B cell (primary cell): ENCODE measurements at regions of chr14 and their contacts with region 1.

Region 1: DNA sequence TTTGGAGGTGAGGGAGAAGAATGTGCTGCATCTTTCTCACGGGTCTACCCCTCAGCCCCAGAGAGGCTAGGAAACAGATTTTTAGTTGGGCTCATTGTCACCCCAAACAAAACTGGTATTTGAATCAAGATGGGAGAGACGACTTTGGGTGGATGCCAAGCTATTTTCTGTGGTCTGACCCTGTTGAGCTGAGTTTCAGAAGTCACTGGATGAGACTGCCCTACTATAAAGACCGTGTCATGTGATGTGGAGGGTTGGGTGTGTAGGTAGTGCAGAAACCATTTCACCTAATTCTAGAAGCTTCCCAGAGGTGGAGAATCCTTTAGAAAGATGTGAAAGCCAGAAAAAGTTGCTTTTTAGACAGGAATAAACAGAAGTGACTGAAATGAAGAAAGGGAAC is 60.2 kb downstream of the IFT43 start:
- DNase-seq: no peak
- ATAC-seq: no peak
- H3K4me3 ChIP-seq: no peak overlapping the region
- H3K4me3 Mint-ChIP-seq: no peak overlapping the region
- H3K27ac ChIP-seq: no peak overlapping the region
- H3K27ac Mint-ChIP-seq: no peak overlapping the region
- H3K4me1 ChIP-seq: no peaks in the 10 kb centered on the region
- H3K4me1 Mint-ChIP-seq: peaks cover 5% of the 10 kb centered on the region
- H3K27me3 ChIP-seq: no peaks in the 10 kb centered on the region
- H3K27me3 Mint-ChIP-seq: no peaks in the 10 kb centered on the region
- CTCF ChIP-seq: no peak

Region 2: GRCh38 chr14:76352639-76353281 is 307.0 kb after region 1 on chr14:
- CTCF ChIA-PET with region 1: interaction called, 121 read pairs
- POLR2A ChIA-PET with region 1: no interaction called
- intact Hi-C with region 1: no loop called
- DNase-seq: peak; percentile 63
- ATAC-seq: no peak
- H3K4me3 ChIP-seq: no peak overlapping the region
- H3K4me3 Mint-ChIP-seq: peak overlapping the region; percentile 16
- H3K27ac ChIP-seq: no peak overlapping the region
- H3K27ac Mint-ChIP-seq: no peak overlapping the region
- H3K4me1 ChIP-seq: peaks cover 3 to 6% of the 10 kb centered on the region in 2 donors
- H3K4me1 Mint-ChIP-seq: peaks cover 4% of the 10 kb centered on the region
- H3K27me3 ChIP-seq: peaks cover 0 to 22% (median 4%) of the 10 kb centered on the region in 4 experiments
- H3K27me3 Mint-ChIP-seq: peaks cover 51% of the 10 kb centered on the region
- CTCF ChIP-seq: peak; percentile 77

Region 3: GRCh38 chr14:76531821-76532318 is 486.1 kb after region 1 on chr14:
- CTCF ChIA-PET with region 1: no interaction called
- POLR2A ChIA-PET with region 1: no interaction called
- intact Hi-C with region 1: no loop called
- DNase-seq: no peak
- ATAC-seq: no peak
- H3K4me3 ChIP-seq: no peak overlapping the region
- H3K4me3 Mint-ChIP-seq: no peak overlapping the region
- H3K27ac ChIP-seq: no peak overlapping the region
- H3K27ac Mint-ChIP-seq: no peak overlapping the region
- H3K4me1 ChIP-seq: no peaks in the 10 kb centered on the region
- H3K4me1 Mint-ChIP-seq: no peaks in the 10 kb centered on the region
- H3K27me3 ChIP-seq: no peaks in the 10 kb centered on the region
- H3K27me3 Mint-ChIP-seq: peaks cover 19% of the 10 kb centered on the region
- CTCF ChIP-seq: no peak